GM10248 (cell line): ENCODE measurements at regions of chr3 and their contacts with region 1.

Region 1: GRCh38 chr3:108031897-108032296 is 58.9 kb downstream of the CD47 start:
- DNase-seq: no peak
- CTCF ChIP-seq: no peak

Region 2: DNA sequence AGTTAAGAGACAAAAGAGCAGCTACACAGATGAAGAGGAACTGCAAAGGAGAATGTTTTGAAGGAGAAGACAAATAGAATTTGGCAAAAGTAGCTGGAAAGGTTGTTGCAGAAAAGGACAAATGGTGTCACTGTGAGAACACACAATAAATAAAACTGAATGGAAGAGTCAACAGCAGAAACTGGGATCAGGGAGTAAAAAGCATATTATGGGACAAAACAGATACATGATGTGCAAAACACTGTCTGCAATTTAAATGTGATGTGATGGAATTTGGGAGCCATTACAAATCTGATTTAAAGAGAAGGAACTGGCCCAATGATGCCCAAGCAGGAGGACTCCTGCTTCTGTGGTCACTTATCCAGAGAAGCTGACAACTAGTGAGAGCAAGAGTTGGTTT is 12.8 kb after region 1 on chr3:
- CTCF ChIA-PET with region 1: interaction called, 19 read pairs
- POLR2A ChIA-PET with region 1: no interaction called
- DNase-seq: no peak
- CTCF ChIP-seq: no peak